Sigmoid colon (tissue), 7 donors: ENCODE measurements at regions of chrX and their contacts with region 1.

Region 1: DNA sequence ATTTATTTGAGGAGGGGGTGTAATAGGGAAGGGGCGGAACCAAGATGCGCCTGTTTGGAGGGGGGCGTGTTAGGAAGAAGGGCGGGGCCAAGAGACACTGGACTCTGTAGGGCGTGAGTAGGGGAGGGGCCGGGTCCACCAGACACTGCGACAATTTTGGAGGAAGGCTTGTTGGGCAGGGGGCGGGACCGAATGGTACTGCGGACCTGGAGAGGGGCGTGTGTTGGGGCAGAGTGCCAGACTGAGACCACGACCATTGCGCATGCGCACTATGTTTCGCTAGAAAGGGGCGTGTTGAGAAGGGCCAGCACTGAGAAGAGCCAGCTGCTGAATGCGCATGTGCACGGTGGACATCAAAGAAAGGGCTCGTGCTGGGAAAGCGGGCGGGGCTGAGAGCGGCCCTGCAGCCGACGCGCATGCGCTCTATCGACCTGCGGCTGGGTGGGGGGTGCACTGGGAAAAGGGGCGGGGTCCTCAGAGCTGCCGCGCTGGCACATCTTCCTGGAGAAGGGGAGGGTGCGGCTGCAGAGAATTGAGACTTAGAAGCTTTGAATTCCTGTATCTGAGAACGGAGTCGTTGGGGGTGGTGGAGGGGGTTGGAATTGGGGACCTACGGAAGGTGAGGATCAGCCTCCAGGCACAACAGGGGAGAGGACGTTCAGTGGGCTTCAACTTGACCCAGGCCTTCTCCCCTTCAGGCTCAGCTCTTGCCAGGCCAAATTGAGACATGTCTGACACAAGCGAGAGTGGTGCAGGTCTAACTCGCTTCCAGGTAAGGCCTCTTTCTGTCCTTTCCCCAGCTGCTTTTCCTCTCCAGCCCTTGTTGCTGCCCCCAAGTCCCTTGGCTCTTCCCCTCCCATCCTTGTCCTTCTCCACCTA is 1.3 kb downstream of the MAGED2 start:
- DNase-seq: peak; percentile 97
- H3K4me3 ChIP-seq: peak overlapping the region; percentile 55 to 73 (median 70)
- H3K27ac ChIP-seq: peak overlapping the region; percentile 87 to 91 (median 90)
- H3K4me1 ChIP-seq: peaks cover 0 to 15% (median 11%) of the 10 kb centered on the region in 4 donors
- H3K27me3 ChIP-seq: no peaks in the 10 kb centered on the region
- CTCF ChIP-seq: no peak
- EP300 ChIP-seq: peak in 1 of 4 donors; percentile 8
- POLR2A ChIP-seq: no peak

Region 2: DNA sequence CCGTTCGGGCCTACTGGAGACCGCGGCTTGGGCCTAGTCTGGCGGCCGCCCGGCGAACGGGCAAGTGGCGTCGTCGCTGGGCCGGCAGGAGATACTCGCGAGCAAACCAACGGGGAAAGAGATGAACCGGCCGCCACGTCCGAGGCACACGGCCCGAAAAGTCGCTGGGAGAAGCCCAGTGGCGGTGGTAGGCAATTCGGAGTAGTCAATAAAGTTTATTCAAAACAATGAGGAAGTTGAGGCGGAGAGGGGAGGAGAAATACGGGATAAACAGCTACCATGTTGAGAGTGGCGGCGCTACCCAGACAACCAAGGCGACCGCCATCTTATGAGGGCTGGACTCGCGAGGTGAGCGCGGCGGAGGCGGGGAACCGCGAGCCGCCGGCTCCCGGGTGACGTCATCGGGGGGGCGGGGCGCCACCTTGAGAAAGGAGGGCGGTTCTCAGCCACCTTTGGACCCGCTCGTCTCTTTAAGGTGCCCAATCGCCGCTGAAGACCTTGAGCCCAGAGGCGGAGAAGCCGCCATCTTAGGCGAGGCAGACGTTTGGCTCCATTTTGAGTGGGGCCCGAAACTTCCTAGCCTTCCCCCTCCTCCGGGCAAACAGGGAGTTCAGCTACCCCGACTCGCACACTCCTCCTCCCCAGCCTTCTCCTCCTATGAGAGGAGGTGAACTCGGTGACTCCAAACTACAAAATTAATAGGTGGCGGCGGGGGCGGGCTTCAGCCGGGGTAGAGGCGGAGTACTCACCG is 764.5 kb before region 1 on chrX and contains the start of gene PHF8:
- intact Hi-C with region 1: loop called (anchors 2 kb)
- DNase-seq: peak; percentile 97
- H3K4me3 ChIP-seq: peak within 1 kb of the TSS; percentile 62 to 76 (median 68)
- H3K27ac ChIP-seq: peak within 1 kb of the TSS; percentile 91 to 95 (median 93)
- H3K4me1 ChIP-seq: no peaks in the 10 kb centered on the region
- H3K27me3 ChIP-seq: no peaks in the 10 kb centered on the region
- CTCF ChIP-seq: no peak
- EP300 ChIP-seq: no peak
- POLR2A ChIP-seq: peak; percentile 16 to 31
- total RNA-seq, gene PHF8: 15.3 to 44.9 (median 22.1) TPM

Region 3: DNA sequence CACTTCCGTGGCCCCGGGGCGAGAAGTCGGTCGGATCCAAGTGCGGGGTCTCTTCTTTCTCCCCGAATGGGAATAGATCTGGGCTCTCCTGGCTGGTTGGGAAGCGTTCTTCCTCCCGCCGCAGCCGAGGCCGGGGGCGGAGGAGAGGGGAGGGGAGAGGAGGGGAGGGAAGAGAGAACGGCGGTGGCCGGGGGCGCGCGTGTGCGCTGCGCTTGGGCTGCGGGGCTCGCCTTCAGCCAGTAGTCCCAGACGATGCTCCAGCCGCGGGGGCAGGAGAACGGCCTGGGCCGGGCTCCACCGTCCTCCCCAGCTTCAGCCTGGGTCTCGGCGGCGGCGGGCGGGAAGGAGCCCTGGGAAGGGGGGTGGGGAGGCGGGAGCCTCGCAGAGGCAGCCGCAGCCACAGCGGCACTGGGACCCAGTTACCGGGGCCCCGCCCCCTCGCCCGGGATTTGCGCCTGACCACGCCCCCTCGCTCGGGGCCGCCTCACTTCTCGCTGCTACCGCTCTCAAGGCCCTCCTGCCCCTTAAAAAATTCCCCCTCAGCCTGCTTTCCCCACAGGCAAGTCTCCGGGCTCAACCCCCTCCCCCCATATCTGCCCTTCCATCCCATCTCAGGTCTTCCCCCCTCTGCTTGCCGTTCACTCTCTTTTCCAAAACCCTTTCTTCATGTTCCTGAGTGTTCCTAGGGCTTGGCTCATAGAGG is 312.9 kb before region 1 on chrX and contains the start of gene FGD1:
- intact Hi-C with region 1: loop called (anchors 10 kb)
- DNase-seq: peak; percentile 85
- H3K4me3 ChIP-seq: peak within 1 kb of the TSS; percentile 53 to 66 (median 62)
- H3K27ac ChIP-seq: peak within 1 kb of the TSS; percentile 78 to 85 (median 83)
- H3K4me1 ChIP-seq: peaks cover 0 to 25% (median 14%) of the 10 kb centered on the region in 4 donors
- H3K27me3 ChIP-seq: no peaks in the 10 kb centered on the region
- CTCF ChIP-seq: no peak
- EP300 ChIP-seq: no peak
- POLR2A ChIP-seq: no peak
- total RNA-seq, gene FGD1: 3.2 to 9.7 (median 4.0) TPM

Region 4: DNA sequence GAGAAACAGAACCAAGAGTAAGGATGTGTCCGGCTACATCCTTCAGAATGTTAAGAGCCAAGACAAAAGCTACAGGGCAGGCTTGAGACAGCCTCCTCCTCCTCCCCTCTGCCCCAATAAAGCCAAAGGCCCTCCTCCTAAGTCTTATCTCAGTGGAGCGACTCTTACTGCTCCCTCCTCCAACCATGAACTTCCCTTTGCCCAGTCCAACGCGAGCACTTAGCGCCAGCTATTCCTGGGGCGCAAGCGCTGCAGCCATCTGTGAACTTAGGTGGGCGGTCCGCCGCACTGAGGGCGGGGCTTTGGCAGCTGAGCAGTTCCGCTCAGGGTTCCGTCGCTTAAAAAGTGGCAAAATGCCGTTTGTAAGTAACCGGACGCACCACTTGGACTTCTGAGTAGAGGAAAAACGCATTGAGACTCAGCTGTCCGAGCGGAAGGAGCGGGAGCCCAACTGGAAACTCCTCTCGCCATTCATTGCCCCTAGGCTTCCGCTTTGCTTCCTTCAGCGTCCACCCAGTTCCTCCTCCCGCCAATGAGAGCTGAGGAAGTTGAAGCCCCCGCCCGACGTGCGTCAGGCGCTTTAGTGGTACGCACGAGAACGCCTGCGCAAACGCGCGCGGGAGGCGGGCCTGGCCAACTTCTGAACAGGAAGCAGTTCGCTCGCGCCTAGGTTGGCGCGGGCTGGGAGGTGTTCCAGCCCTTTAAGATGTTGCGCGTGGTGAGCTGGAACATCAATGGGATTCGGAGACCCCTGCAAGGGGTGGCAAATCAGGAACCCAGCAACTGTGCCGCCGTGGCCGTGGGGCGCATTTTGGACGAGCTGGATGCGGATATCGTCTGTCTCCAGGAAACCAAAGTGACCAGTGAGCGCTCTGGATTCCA is 191.1 kb after region 1 on chrX and contains the start of gene APEX2:
- intact Hi-C with region 1: loop called (anchors 5 kb)
- DNase-seq: peak; percentile 96
- H3K4me3 ChIP-seq: peak within 1 kb of the TSS; percentile 34 to 58 (median 55)
- H3K27ac ChIP-seq: peak within 1 kb of the TSS; percentile 83 to 87 (median 84)
- H3K4me1 ChIP-seq: peaks cover 0 to 15% (median 6%) of the 10 kb centered on the region in 4 donors
- H3K27me3 ChIP-seq: no peaks in the 10 kb centered on the region
- CTCF ChIP-seq: no peak
- EP300 ChIP-seq: no peak
- POLR2A ChIP-seq: peak; percentile 66 to 77
- total RNA-seq, gene APEX2: 3.9 to 5.7 (median 4.6) TPM

Region 5: GRCh38 chrX:55268091-55268490 is 459.2 kb after region 1 on chrX:
- intact Hi-C with region 1: no loop called
- DNase-seq: no peak
- H3K4me3 ChIP-seq: no peak overlapping the region
- H3K27ac ChIP-seq: no peak overlapping the region
- H3K4me1 ChIP-seq: no peaks in the 10 kb centered on the region
- H3K27me3 ChIP-seq: no peaks in the 10 kb centered on the region
- CTCF ChIP-seq: no peak
- EP300 ChIP-seq: no peak
- POLR2A ChIP-seq: no peak

Region 6: DNA sequence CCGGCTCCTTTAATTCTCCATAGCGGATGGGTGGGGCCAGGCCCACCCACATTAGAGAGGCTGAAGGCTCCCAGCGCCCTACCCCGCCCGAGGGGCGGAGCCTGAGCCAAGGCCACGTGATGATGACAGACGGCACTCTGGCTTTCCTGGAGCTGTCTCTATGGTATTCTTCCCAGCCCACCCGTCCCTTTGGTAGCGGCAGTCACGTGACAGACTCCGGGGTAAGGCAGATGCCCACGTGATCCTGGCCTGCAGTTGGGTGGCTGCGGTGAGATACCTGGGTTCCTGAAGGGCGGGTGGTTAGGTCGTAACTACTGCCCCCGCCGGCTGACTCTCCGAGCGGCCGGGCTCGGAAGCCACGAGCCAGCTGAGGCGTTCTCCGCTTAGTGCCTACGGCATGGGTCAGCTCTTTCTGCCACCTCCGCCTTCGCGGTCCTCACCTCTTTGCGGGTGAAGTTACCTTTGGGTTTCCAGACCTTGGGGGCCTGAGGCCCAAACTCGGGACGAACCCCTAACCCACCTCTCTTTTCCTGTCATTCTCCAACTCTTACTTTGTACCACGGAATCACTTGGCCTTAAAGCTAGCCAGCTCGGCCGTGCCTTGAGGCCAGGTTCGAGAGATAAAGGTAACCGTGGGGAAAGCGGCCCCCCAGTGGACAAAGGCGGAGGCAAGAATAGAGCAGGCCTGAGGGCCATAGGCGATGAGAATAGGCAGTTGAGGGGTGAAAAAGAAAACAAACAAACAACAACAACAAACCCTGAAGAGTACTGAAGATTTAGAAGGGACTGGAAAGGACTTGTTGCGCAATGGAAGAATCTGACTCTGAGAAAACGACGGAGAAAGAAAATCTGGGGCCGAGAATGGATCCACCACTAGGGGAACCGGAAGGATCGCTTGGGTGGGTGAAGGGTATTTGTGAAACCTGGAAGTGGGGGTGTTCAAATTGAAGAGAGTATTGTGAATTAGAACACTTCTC is 909.0 kb after region 1 on chrX and contains the start of gene RRAGB:
- intact Hi-C with region 1: loop called (anchors 10 kb)
- DNase-seq: peak; percentile 97
- H3K4me3 ChIP-seq: peak within 1 kb of the TSS; percentile 49 to 67 (median 62)
- H3K27ac ChIP-seq: peak within 1 kb of the TSS; percentile 81 to 87 (median 84)
- H3K4me1 ChIP-seq: peaks cover 0 to 12% (median 0%) of the 10 kb centered on the region in 4 donors
- H3K27me3 ChIP-seq: no peaks in the 10 kb centered on the region
- CTCF ChIP-seq: peak in 3 of 4 experiments; percentile 45 to 57 (median 47)
- EP300 ChIP-seq: peak in 1 of 4 donors; percentile 26
- POLR2A ChIP-seq: no peak
- total RNA-seq, gene RRAGB: 10.0 to 41.4 (median 24.4) TPM